Esophagus muscularis mucosa (tissue), 4 donors: ENCODE measurements at regions of chr18 and their contacts with region 1.

Region 1: GRCh38 chr18:21191596-21192307 is 50.3 kb upstream of the GREB1L start:
- DNase-seq: no peak
- H3K4me3 ChIP-seq: no peak overlapping the region
- H3K27ac ChIP-seq: no peak overlapping the region
- H3K4me1 ChIP-seq: peaks cover 0 to 6% (median 2%) of the 10 kb centered on the region in 4 donors
- H3K27me3 ChIP-seq: no peaks in the 10 kb centered on the region
- CTCF ChIP-seq: peak; percentile 35 to 65 (median 57)
- EP300 ChIP-seq: no peak
- POLR2A ChIP-seq: no peak

Region 2: GRCh38 chr18:21117409-21118131 is 74.2 kb before region 1 on chr18:
- intact Hi-C with region 1: no loop called
- DNase-seq: no peak
- H3K4me3 ChIP-seq: peak overlapping the region in 1 of 4 donors; percentile 1
- H3K27ac ChIP-seq: peak overlapping the region; percentile 28 to 72 (median 54)
- H3K4me1 ChIP-seq: peaks cover 0 to 27% (median 16%) of the 10 kb centered on the region in 4 donors
- H3K27me3 ChIP-seq: no peaks in the 10 kb centered on the region
- CTCF ChIP-seq: no peak
- EP300 ChIP-seq: no peak
- POLR2A ChIP-seq: no peak

Region 3: DNA sequence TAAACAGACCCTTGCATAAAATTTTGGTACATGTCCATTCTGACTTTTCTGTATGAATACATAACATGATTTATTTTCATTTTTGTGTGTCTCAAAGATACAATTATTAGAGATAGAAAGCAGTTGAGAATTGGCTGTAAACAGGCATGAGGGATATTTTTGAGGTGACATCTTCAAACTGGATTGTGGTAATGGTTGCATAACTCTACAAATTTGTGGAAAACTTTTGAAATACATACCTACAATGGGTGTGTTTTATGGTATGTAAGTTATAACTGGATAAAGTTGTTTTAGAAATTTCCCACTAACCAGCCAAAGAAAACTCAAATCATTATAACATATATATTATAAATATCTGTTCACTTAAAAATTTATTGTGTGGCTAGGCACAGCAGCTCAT is 89.9 kb after region 1 on chr18:
- intact Hi-C with region 1: no loop called
- DNase-seq: no peak
- H3K4me3 ChIP-seq: no peak overlapping the region
- H3K27ac ChIP-seq: no peak overlapping the region
- H3K4me1 ChIP-seq: peaks cover 0 to 15% (median 4%) of the 10 kb centered on the region in 4 donors
- H3K27me3 ChIP-seq: no peaks in the 10 kb centered on the region
- CTCF ChIP-seq: no peak
- EP300 ChIP-seq: no peak
- POLR2A ChIP-seq: no peak

Region 4: GRCh38 chr18:21444465-21445023 is 252.8 kb after region 1 on chr18:
- intact Hi-C with region 1: loop called (anchors 2 kb)
- DNase-seq: no peak
- H3K4me3 ChIP-seq: no peak overlapping the region
- H3K27ac ChIP-seq: no peak overlapping the region
- H3K4me1 ChIP-seq: peaks cover 0 to 3% (median 0%) of the 10 kb centered on the region in 4 donors
- H3K27me3 ChIP-seq: no peaks in the 10 kb centered on the region
- CTCF ChIP-seq: peak; percentile 55 to 71 (median 66)
- EP300 ChIP-seq: no peak
- POLR2A ChIP-seq: no peak

Region 5: GRCh38 chr18:21955757-21956652 is 764.3 kb after region 1 on chr18:
- intact Hi-C with region 1: loop called (anchors 10 kb)
- DNase-seq: no peak
- H3K4me3 ChIP-seq: no peak overlapping the region
- H3K27ac ChIP-seq: no peak overlapping the region
- H3K4me1 ChIP-seq: no peaks in the 10 kb centered on the region
- H3K27me3 ChIP-seq: no peaks in the 10 kb centered on the region
- CTCF ChIP-seq: peak; percentile 72 to 89 (median 87)
- EP300 ChIP-seq: no peak
- POLR2A ChIP-seq: no peak

Region 6: DNA sequence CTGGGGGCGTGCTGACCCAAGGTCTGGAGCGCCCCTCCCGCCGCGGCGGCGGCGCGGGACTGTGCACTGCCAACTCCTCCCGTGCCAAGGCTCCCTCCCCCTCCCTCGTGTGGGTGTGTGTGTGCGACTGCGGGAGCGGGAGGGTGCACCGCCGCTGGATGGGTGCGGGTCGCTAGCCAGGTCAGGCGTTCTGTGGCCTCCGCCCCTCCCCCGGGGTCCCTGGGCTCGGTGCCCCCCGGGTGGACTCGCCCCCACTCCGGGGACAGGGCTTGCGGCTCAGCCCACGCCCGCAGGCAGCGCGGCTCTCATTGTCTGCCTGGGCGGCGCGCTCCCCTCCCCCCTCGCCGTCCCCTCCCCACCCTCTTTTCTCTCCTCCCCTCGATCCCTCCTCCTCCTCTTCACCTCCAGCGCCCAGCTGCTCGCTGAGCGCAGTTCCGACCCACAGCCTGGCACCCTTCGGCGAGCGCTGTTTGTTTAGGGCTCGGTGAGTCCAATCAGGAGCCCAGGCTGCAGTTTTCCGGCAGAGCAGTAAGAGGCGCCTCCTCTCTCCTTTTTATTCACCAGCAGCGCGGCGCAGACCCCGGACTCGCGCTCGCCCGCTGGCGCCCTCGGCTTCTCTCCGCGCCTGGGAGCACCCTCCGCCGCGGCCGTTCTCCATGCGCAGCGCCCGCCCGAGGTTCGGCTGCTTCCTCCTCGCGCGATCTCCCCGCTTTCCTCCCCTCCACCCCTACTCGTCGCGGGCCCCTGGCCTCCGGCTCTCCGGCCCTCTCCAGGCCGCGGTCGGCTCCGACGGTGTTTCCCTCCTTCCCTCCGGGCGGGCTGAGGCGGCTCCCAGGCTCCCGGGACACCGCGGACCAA is 977.5 kb after region 1 on chr18 and contains the start of gene GATA6:
- intact Hi-C with region 1: no loop called
- DNase-seq: no peak
- H3K4me3 ChIP-seq: peak within 1 kb of the TSS; percentile 68 to 85 (median 80)
- H3K27ac ChIP-seq: peak within 1 kb of the TSS; percentile 86 to 93 (median 88)
- H3K4me1 ChIP-seq: peaks cover 9 to 80% (median 74%) of the 10 kb centered on the region in 4 donors
- H3K27me3 ChIP-seq: peaks cover 0 to 97% (median 45%) of the 10 kb centered on the region in 4 donors
- CTCF ChIP-seq: peak; percentile 55 to 61 (median 57)
- EP300 ChIP-seq: no peak
- POLR2A ChIP-seq: peak; percentile 35
- total RNA-seq, gene GATA6: 6.6 to 35.5 (median 12.5) TPM